H1 (cell line): ENCODE measurements at regions of chr2 and their contacts with region 1.

Region 1: GRCh38 chr2:98269274-98269673 is 77.0 kb upstream of the CNGA3 start:
- DNase-seq: no peak
- H3K4me3 ChIP-seq: no peak overlapping the region
- H3K27ac ChIP-seq: no peak overlapping the region
- H3K4me1 ChIP-seq: peaks cover 0 to 3% (median 0%) of the 10 kb centered on the region in 4 experiments; a peak in 1 of 7 replicates
- H3K27me3 ChIP-seq: no peaks in the 10 kb centered on the region
- CTCF ChIP-seq: peak in 2 of 3 experiments; percentile 64 to 72; a peak in 3 of 4 replicates
- EP300 ChIP-seq: no peak
- POLR2A ChIP-seq: no peak
- RAD21 ChIP-seq: peak; percentile 74 to 83

Region 2: DNA sequence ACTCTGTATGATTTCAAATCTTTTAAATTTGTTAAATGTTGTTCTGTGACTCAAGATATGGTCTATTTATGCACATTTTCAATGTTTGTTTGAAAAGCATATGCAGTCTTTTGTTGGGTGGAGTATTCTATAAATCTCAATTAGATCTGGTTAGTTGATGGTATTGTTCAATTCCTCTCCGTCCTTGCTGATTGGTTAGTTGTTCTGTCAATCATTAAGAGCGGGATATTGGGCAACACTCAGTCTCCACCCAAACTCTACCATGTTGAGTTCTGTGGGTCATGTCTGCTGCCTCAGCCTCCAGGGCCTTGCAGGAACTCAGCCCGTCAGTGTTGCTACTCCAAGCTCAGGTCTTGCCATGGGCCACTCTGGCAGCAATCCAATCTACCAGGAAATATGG is 63.4 kb before region 1 on chr2:
- CTCF ChIA-PET with region 1: no interaction called
- POLR2A ChIA-PET with region 1: no interaction called
- DNase-seq: no peak
- H3K4me3 ChIP-seq: no peak overlapping the region
- H3K27ac ChIP-seq: no peak overlapping the region
- H3K4me1 ChIP-seq: no peaks in the 10 kb centered on the region
- H3K27me3 ChIP-seq: no peaks in the 10 kb centered on the region
- CTCF ChIP-seq: no peak
- EP300 ChIP-seq: no peak
- POLR2A ChIP-seq: no peak
- RAD21 ChIP-seq: no peak

Region 3: DNA sequence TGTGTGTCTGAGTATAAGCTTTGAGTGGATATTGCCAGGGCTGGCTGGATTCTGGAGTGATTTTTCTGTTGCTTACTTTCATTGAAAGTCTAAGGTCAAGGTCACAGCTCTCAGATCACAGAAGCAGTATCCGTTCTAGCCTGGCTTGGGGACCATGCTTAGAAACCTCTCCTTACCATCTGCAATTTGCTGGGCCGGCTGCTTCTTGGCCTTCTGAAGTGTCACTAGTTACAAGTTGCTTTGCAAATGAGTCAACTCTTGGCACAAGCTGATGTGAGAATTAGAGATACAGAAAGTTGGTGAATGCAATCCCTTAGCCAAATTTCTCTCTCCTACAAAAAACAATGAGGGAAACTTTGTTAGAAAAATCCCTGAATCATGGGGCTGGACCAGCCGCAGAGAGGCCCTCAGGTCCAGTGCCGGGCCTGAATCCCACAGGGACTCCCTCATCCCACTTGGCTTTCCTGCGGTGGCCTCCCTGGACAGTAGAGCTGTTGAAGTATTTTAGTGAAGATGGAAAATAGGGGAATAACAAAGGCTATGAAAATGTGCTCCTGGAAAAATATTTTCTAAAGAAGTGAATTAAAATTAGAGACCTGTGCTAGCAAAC is 15.7 kb before region 1 on chr2:
- CTCF ChIA-PET with region 1: interaction called, 20 read pairs
- POLR2A ChIA-PET with region 1: no interaction called
- DNase-seq: no peak
- H3K4me3 ChIP-seq: no peak overlapping the region
- H3K27ac ChIP-seq: no peak overlapping the region
- H3K4me1 ChIP-seq: no peaks in the 10 kb centered on the region
- H3K27me3 ChIP-seq: no peaks in the 10 kb centered on the region
- CTCF ChIP-seq: no peak
- EP300 ChIP-seq: no peak
- POLR2A ChIP-seq: no peak
- RAD21 ChIP-seq: no peak

Region 4: DNA sequence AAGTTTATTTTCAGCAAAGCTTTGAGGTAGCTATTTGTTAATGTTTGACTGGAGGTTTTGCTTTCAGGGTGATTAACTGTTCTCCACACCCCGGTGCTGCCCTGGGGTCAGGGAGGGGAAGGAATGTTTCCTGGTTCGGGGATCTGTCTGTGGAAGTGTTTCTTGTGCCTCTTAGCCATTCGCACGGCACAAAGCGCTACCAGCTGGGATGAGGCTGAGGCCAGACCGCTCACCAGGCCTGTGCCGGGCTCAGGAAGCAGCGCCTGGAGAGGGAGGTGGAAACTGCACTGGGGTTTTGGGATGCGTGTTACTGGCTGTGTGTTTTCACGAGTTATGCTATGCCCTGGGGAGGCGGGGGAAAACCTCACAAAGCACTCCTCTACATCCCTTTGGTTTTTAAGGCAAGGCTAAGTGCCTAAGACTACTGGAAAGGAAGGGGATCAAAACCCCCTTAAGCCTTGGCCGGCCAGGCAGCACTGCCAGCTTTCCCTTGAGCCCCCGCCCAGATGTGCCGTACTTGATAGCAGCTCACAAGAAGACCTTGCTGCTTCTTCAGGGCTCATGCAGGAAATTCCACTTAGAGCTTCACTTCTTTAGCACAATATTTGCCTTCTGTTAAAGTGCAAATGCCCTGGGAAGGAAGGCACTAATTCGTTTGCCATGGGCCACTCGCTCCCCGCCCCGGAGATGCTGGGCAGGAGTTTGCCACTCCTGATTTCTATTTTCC is 11.3 kb after region 1 on chr2:
- CTCF ChIA-PET with region 1: interaction called, 25 read pairs
- POLR2A ChIA-PET with region 1: no interaction called
- DNase-seq: no peak
- H3K4me3 ChIP-seq: no peak overlapping the region
- H3K27ac ChIP-seq: no peak overlapping the region
- H3K4me1 ChIP-seq: no peaks in the 10 kb centered on the region; a peak in 1 of 7 replicates
- H3K27me3 ChIP-seq: no peaks in the 10 kb centered on the region; a peak in 1 of 7 replicates
- CTCF ChIP-seq: no peak
- EP300 ChIP-seq: no peak
- POLR2A ChIP-seq: no peak
- RAD21 ChIP-seq: no peak

Region 5: GRCh38 chr2:98341241-98341640 is 72.0 kb after region 1 on chr2:
- CTCF ChIA-PET with region 1: no interaction called
- POLR2A ChIA-PET with region 1: no interaction called
- DNase-seq: no peak
- H3K4me3 ChIP-seq: no peak overlapping the region
- H3K27ac ChIP-seq: no peak overlapping the region
- H3K4me1 ChIP-seq: peaks cover 0 to 3% (median 0%) of the 10 kb centered on the region in 4 experiments; a peak in 4 of 7 replicates
- H3K27me3 ChIP-seq: peaks cover 13 to 26% (median 23%) of the 10 kb centered on the region in 4 experiments
- CTCF ChIP-seq: no peak
- EP300 ChIP-seq: no peak
- POLR2A ChIP-seq: no peak
- RAD21 ChIP-seq: no peak

Region 6: DNA sequence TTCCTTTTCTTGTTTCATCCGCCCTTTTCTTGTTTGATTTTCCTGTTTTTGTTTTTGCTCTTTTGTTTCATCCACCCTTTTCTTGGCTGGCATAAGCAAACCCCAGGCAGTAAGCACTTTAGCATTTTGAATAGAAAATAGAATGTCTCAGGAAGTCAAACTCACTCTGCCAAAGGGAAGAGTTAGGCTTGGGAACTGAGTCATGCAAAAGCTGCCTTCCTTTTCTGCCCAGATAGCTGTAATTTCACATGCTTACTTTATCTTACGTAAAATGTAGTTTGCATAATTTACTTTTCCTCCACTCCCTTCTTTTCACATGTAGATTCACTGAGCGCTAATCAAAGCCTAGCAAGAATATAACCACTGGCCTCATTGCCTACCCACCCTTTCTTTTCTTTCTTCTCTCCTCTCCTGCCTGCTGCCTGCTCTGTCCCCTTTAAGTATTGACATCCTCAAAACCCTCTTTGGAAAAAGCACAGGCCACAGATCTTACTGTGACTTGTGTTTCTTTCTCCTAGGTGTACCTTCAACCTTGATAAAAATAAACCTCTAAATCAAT is 125.4 kb after region 1 on chr2:
- CTCF ChIA-PET with region 1: no interaction called
- POLR2A ChIA-PET with region 1: no interaction called
- DNase-seq: no peak
- H3K4me3 ChIP-seq: no peak overlapping the region
- H3K27ac ChIP-seq: no peak overlapping the region
- H3K4me1 ChIP-seq: peaks cover 0 to 4% (median 0%) of the 10 kb centered on the region in 4 experiments; a peak in 2 of 7 replicates
- H3K27me3 ChIP-seq: peaks cover 0 to 2% (median 0%) of the 10 kb centered on the region in 4 experiments; a peak in 2 of 7 replicates
- CTCF ChIP-seq: no peak
- EP300 ChIP-seq: no peak
- POLR2A ChIP-seq: no peak
- RAD21 ChIP-seq: no peak

Region 7: DNA sequence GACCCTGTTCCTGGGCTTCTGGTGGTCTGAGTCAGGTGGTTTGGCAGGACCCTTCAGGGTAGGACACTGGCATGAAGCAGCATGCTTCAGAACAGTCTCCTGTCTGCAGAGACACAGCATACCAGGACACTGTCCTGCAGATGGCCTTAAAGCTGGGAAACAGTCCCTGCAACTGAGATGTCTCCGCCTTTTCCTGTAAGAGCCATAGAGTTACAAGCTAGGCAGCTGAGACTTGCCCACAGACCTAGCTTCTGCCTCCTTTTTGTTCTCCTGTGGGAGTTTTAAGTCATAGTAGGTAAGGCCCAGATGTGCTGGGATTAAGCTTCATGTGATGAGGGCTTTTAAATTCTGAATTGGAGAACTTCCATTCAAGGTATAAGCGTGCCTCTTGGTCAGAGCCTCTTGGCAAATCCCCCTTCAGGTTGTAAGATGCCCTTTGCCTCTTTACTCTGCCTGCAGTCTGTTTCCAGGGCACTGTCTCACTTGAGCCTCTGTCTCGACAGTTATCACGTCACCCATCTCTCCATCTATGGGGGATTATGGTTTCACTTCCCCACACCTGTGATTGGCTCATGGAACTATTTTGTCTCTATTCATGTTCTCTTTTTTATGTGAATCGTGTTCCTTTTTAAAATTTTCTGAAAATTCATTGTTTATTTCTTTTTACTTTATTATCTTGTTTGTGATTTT is 287.2 kb after region 1 on chr2:
- CTCF ChIA-PET with region 1: no interaction called
- POLR2A ChIA-PET with region 1: no interaction called
- DNase-seq: no peak
- H3K4me3 ChIP-seq: no peak overlapping the region
- H3K27ac ChIP-seq: no peak overlapping the region
- H3K4me1 ChIP-seq: no peaks in the 10 kb centered on the region
- H3K27me3 ChIP-seq: no peaks in the 10 kb centered on the region
- CTCF ChIP-seq: no peak
- EP300 ChIP-seq: no peak
- POLR2A ChIP-seq: no peak
- RAD21 ChIP-seq: no peak